Posterior vena cava (tissue), 2 donors: ENCODE measurements at regions of chr21 and their contacts with region 1.

Region 1: DNA sequence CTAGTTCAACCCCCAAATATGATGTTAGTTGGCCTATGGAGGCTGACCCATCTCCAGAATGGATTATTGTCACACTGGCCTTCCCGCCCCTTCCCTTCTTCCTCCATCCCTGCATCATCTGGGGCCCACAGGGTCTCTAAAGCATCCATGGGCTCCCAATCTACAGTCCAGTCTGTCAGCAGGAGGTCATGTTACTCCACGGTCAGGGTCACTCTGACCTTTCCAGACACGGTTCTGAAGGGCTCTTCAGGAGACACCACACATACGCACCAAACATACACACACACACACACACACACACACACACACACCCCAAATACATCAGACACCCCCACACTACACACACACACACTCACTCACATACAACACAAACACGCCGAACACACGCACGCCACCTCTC is 118.0 kb downstream of the PCP4 start:
- DNase-seq: no peak

Region 2: DNA sequence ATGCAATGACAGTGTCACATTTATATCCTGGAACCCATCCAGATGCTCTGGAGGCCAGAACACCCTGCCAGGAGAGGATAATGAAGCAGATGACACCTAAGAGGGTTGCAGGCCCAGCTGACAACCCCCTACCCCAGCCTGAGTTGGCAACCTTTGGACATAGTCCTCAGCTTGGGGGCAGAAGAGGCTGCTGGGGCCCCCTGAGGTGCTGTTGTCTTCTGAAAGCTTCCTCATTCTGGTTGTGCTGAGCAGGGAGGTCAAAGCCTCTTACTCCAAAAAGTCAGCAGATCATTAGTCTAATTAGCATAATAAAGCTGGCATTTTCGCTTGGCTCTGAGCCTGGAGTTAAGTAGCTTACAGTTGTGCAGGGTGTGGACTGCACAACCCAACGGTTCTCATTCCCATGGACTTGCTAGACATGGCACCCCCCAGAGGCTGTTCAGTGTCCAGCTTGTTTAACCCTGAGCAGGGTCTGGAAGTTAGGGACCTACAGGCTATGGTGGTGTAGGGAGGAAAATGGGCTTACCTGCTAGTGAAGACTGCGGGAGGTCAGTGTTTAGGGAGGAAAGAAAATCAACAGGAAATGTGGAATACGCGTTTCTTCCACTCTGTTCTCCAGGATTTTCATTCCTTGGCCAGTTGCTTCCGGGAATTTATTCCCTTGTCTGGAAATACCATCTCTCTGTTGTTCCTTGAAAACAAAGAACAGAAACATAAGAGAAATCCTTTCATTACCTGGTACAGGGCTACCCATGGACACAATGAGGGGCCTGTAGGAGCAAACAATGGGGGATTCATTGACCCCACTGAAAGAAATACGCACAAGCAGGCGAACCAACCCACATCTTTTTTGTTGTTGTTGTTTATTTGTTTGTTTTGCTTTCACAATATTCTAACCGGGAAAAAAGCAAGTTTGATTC is 1162.4 kb after region 1 on chr21:
- intact Hi-C with region 1: loop called in 1 of 2 experiments (anchors 5 kb)
- DNase-seq: peak; percentile 32